Tibial artery (tissue), 4 donors: ENCODE measurements at regions of chr3 and their contacts with region 1.

Region 1: GRCh38 chr3:141231101-141231935 is at the start of gene PXYLP1:
- DNase-seq: peak; percentile 94 to 97
- H3K4me3 ChIP-seq: peak within 1 kb of the TSS; percentile 95 to 99
- H3K27ac ChIP-seq: peak within 1 kb of the TSS; percentile 89 to 90
- H3K4me1 ChIP-seq: peaks cover 0 to 26% (median 12%) of the 10 kb centered on the region in 4 donors
- H3K27me3 ChIP-seq: no peaks in the 10 kb centered on the region
- CTCF ChIP-seq: peak; percentile 59 to 97

Region 2: GRCh38 chr3:141279077-141279967 is 48.0 kb after region 1 on chr3:
- intact Hi-C with region 1: loop called (anchors 5 kb)
- DNase-seq: no peak
- H3K4me3 ChIP-seq: no peak overlapping the region
- H3K27ac ChIP-seq: peak overlapping the region; percentile 62 to 66
- H3K4me1 ChIP-seq: peaks cover 3 to 54% (median 30%) of the 10 kb centered on the region in 4 donors
- H3K27me3 ChIP-seq: no peaks in the 10 kb centered on the region
- CTCF ChIP-seq: peak; percentile 50 to 60

Region 3: DNA sequence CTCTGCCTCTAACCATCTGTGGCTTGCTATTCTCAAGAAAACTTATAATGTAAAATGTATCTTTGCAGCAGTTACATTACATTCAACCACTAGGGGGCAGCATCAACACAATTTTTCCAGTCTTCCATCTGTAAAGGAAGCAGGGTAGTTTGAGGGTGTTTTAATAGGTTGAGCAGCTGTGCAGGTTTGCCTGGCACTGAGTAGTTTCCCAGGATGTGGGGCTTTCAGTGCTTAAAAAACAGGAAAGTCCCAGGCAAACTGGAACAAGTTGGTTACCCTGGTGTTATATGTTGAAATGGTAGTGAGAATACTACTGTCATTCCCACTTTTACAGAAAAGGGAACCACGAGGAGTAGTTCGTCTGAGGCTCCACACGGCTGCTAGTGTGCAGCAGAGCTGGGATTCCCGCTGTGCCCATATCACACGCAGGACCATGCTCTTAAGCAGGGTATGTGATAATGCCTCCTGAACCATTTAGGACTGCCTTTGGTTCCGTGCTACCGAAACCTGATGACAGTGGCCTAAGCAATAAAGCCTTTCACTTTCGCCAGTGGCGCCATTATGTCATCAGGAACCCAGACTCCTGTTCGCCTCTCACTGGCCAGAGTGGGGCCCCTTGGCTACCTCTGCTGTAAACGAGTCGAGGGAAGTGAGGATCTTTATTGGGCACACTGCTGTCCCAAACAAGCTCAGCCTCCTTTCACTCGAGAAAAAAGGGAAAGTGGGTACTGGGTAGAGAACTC is 72.3 kb after region 1 on chr3:
- intact Hi-C with region 1: loop called (anchors 5 kb)
- DNase-seq: no peak
- H3K4me3 ChIP-seq: no peak overlapping the region
- H3K27ac ChIP-seq: no peak overlapping the region
- H3K4me1 ChIP-seq: peaks cover 0 to 13% (median 5%) of the 10 kb centered on the region in 4 donors
- H3K27me3 ChIP-seq: no peaks in the 10 kb centered on the region
- CTCF ChIP-seq: peak; percentile 76 to 82

Region 4: DNA sequence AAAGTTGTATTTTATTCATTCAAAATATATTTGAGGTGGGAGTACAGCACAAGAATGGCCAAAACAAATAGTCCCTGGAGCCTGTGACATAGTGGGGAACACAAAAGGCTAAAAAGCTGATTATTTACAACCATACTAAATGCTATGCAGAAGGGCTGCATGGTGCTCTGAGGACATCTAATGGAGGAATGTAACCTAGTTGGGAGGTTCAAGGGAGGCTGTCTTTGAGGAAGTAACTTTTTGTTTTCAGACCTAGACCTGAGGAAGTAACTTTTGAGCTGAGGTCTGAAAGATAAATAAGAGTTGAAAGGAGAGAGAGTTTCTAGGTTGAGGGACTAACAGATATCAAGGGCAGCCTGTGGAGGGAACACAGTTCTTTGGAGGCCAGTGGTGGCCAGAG is 220.7 kb after region 1 on chr3:
- intact Hi-C with region 1: loop called (anchors 10 kb)
- DNase-seq: no peak
- H3K4me3 ChIP-seq: no peak overlapping the region
- H3K27ac ChIP-seq: peak overlapping the region; percentile 13 to 57
- H3K4me1 ChIP-seq: peaks cover 0 to 64% (median 11%) of the 10 kb centered on the region in 4 donors
- H3K27me3 ChIP-seq: no peaks in the 10 kb centered on the region
- CTCF ChIP-seq: peak; percentile 63 to 79